K562 (cell line): ENCODE measurements at regions of chr7 and their contacts with region 1.

Region 1: DNA sequence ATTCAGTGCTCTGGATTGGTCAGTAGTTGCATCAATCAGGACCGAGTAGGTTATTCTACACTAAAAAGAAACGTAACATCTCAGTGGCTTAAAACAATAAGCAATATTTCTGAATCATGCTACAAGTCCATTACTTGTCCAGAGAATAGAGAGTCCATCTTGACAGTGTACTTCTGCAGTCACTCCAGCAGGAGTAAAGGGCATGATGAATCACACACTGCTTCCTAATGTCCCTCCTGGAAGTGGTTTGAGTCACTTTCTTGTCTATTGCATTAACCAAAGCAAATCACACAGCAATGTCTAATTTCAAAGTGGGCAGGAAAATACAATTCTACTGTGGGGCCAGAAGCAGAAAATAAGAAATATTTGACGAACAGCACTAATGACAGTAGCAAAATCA is 124.8 kb downstream of the TSPAN12 start:
- DNase-seq: no peak
- ATAC-seq: peak; percentile 65
- H3K4me3 ChIP-seq: no peak overlapping the region
- H3K27ac ChIP-seq: no peak overlapping the region
- H3K4me1 ChIP-seq: no peaks in the 10 kb centered on the region
- H3K27me3 ChIP-seq: no peaks in the 10 kb centered on the region
- CTCF ChIP-seq: no peak
- EP300 ChIP-seq: no peak
- POLR2A ChIP-seq: no peak
- RAD21 ChIP-seq: no peak

Region 2: DNA sequence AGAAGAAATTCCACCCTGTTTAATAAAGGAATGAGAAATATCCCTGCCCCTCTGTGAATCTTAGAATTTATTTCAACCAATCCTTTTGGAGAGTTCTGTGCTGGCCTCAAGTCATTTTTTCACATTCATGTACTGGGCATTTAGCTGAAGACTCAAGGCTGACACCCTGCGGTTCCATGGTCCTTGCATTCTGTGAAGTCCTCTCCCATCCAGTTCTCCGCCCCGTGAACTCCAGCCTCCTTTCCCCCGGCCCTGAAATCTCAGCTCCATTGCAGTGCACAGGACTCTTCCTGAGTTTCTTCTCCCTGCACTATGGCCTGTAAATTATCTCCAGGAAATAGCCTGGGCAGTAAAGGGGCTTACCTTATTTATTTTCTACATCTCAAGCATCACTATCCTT is 643.2 kb before region 1 on chr7:
- CTCF ChIA-PET with region 1: no interaction called
- POLR2A ChIA-PET with region 1: no interaction called
- in situ Hi-C with region 1: no loop called
- intact Hi-C with region 1: loop called (anchors 10 kb)
- DNase-seq: peak in 3 of 4 experiments; percentile 15 to 76 (median 51)
- ATAC-seq: peak; percentile 98
- H3K4me3 ChIP-seq: no peak overlapping the region
- H3K27ac ChIP-seq: no peak overlapping the region
- H3K4me1 ChIP-seq: no peaks in the 10 kb centered on the region
- H3K27me3 ChIP-seq: no peaks in the 10 kb centered on the region; a peak in 1 of 5 replicates
- CTCF ChIP-seq: peak; percentile 65 to 72 (median 66)
- EP300 ChIP-seq: no peak
- POLR2A ChIP-seq: no peak
- RAD21 ChIP-seq: peak; percentile 67 to 81

Region 3: GRCh38 chr7:120114626-120115025 is 618.5 kb before region 1 on chr7:
- CTCF ChIA-PET with region 1: no interaction called
- POLR2A ChIA-PET with region 1: no interaction called
- in situ Hi-C with region 1: no loop called
- intact Hi-C with region 1: no loop called
- DNase-seq: no peak
- ATAC-seq: no peak
- H3K4me3 ChIP-seq: no peak overlapping the region
- H3K27ac ChIP-seq: no peak overlapping the region
- H3K4me1 ChIP-seq: no peaks in the 10 kb centered on the region
- H3K27me3 ChIP-seq: no peaks in the 10 kb centered on the region
- CTCF ChIP-seq: no peak
- EP300 ChIP-seq: no peak
- POLR2A ChIP-seq: no peak
- RAD21 ChIP-seq: no peak

Region 4: GRCh38 chr7:120588416-120588815 is 144.7 kb before region 1 on chr7:
- CTCF ChIA-PET with region 1: no interaction called
- POLR2A ChIA-PET with region 1: no interaction called
- in situ Hi-C with region 1: no loop called
- intact Hi-C with region 1: no loop called
- DNase-seq: no peak
- ATAC-seq: no peak
- H3K4me3 ChIP-seq: no peak overlapping the region
- H3K27ac ChIP-seq: no peak overlapping the region
- H3K4me1 ChIP-seq: no peaks in the 10 kb centered on the region
- H3K27me3 ChIP-seq: no peaks in the 10 kb centered on the region
- CTCF ChIP-seq: no peak
- EP300 ChIP-seq: no peak
- POLR2A ChIP-seq: no peak
- RAD21 ChIP-seq: no peak